AG04449 (cell line): ENCODE measurements at regions of chr3 and their contacts with region 1.

Region 1: GRCh38 chr3:45929042-45929679 is 14.1 kb upstream of the CXCR6 start:
- DNase-seq: no peak
- H3K4me3 ChIP-seq: no peak overlapping the region
- CTCF ChIP-seq: peak; percentile 91

Region 2: DNA sequence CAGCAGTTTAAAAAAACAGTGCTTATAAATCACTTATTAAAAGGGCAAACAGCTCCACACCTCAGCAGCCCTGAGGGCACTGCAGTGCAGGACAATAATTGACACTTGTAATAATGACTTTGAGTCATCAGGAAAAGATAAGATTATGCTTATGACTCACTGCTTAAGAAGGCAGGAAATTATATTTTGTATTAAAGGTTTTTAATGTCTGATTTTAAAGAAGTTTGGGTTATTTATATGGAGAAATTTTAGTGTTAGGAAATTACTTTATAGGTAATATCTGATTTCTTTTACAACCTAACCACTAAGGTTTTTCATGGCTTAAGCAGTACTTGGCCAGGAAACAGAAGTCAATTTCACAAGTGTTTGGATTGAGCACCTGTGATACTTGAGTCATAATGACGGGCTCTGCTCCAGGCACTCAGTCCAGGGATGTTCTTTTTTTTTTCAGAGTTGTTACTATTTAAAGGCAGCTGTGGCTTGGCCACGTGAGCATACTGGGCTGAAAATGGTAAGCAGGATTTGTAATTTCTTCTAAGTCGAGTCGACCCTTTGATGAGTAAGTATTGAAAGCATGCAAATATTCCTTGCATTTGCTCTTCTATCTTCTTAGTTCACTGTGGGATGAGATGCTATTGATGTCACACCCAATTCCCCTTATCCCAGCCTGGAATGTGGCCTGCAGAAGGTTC is 111.2 kb before region 1 on chr3:
- CTCF ChIA-PET with region 1: no interaction called
- POLR2A ChIA-PET with region 1: no interaction called
- DNase-seq: peak; percentile 90
- H3K4me3 ChIP-seq: no peak overlapping the region
- CTCF ChIP-seq: no peak

Region 3: DNA sequence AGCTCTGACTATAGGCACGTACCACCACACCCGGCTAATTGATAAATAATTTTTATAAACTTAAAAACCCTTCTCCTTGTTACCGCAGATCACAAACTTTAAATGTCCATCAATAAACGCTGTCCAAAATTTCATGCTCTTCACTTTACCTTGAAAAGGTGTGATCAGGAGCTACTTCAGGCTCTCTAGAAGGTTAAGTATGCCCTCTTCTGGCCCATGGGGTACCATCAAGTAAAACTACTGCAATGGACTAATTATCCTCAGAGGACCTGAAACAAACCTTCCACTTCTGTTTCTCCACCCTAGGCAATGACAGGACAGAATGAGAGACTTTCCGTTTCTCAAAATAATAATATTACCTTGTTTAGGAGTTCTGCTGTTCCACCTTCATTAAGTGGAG is 96.5 kb before region 1 on chr3:
- CTCF ChIA-PET with region 1: interaction called, 10 read pairs
- POLR2A ChIA-PET with region 1: no interaction called
- DNase-seq: no peak
- H3K4me3 ChIP-seq: no peak overlapping the region
- CTCF ChIP-seq: peak; percentile 7

Region 4: DNA sequence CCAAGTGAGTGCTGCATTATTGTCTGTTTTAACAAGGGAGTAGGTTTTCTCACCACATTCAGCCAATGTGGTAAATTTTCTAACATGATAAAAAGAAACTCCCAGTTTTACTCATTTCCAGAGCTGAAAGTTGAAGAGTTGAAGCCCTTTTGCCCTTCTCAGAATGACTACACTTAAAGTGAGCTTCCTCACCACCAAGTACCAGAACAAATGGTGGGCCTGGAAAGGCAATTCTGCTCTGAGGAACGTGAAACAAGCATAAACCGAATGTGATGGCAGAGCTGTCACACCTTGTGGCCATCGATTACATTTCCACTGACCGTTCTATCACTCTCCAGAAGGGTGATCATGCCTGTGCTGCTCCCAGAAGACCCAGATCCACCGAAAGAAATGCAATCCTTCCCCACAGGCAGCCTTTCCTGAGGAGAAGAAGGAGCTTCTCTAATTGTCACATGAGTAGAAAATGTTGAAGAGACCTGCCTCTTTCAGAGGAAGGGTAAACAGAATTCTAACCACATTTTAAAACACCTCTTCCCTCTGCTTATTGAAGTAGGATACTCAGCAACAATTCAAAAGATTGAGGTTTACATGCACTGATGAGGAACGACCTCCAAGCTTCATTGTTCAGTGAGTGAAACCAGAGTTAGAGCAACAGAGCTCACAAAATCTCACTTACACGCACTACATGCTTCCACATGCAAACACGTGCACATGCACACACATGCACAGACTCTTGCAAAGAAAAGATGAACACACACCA is 64.2 kb before region 1 on chr3:
- CTCF ChIA-PET with region 1: no interaction called
- POLR2A ChIA-PET with region 1: no interaction called
- DNase-seq: no peak
- H3K4me3 ChIP-seq: no peak overlapping the region
- CTCF ChIP-seq: no peak

Region 5: GRCh38 chr3:45906681-45907407 is 22.3 kb before region 1 on chr3:
- CTCF ChIA-PET with region 1: interaction called, 47 read pairs
- POLR2A ChIA-PET with region 1: no interaction called
- DNase-seq: peak; percentile 28
- H3K4me3 ChIP-seq: no peak overlapping the region
- CTCF ChIP-seq: peak; percentile 75